Breast epithelium (tissue), 4 donors: ENCODE measurements at regions of chr6 and their contacts with region 1.

Region 1: DNA sequence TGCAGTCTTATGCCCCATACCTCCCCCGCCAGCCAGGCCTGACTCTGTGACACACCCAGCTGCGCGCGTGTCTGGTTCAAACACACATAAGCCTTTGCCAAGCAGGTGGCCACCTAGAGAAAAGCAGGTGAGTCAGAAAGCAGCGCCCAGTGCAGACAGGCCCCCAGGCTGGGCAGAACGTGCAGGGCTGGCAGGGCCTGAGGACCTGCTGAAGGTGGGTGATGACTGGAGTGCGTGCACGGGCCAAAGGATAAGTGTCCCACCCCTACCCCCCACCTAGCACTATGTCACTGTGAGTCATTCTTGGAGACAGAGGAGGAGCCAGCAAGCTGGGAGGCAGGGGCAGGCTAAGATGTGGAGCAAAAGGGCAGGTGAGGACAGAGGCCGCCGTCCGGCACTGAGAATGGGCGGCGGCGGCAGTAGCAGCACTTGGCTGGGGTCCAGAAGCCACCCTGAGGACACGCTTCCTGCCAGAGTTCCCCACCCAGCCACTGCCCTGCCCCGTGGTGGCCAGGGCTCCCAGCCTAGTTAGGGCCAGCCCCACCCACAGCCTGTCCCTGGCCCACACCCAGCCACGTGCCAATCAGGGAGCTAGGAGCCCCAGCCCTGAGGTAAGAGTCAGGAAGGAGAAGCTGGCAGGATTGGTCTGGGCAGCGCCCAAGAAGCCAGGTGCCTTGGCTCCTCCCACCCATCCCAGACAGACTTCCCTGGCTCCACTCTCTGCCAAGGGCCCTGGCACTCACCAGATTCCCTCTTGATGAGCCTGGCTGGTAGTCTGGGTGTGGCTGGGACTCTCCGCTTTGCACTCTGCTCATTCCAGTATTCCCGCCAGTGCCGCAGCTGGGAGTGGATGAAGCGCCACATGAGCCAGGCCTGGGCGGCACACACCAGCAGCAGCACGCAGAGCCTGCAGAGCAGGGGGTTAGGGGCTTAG is 72.7 kb downstream of the TRAM2 start:
- DNase-seq: peak; percentile 92 to 97
- H3K4me3 ChIP-seq: peak overlapping the region in 2 of 3 donors; percentile 27 to 47
- H3K27ac ChIP-seq: peak overlapping the region; percentile 83 to 86
- H3K4me1 ChIP-seq: peaks cover 3 to 13% of the 10 kb centered on the region in 2 donors
- H3K27me3 ChIP-seq: no peaks in the 10 kb centered on the region
- CTCF ChIP-seq: no peak
- POLR2A ChIP-seq: no peak

Region 2: GRCh38 chr6:52577022-52577777 is 73.1 kb after region 1 on chr6 and contains the start of gene TRAM2:
- intact Hi-C with region 1: loop called (anchors 10 kb)
- DNase-seq: peak; percentile 57 to 71
- H3K4me3 ChIP-seq: peak within 1 kb of the TSS; percentile 84 to 92 (median 87)
- H3K27ac ChIP-seq: peak within 1 kb of the TSS; percentile 98 to 99
- H3K4me1 ChIP-seq: peaks cover 2 to 6% of the 10 kb centered on the region in 2 donors
- H3K27me3 ChIP-seq: no peaks in the 10 kb centered on the region
- CTCF ChIP-seq: no peak
- POLR2A ChIP-seq: no peak
- total RNA-seq, gene TRAM2: 11.9 to 33.0 (median 24.3) TPM